MCF 10A (cell line): ENCODE measurements at regions of chr7 and their contacts with region 1.

Region 1: DNA sequence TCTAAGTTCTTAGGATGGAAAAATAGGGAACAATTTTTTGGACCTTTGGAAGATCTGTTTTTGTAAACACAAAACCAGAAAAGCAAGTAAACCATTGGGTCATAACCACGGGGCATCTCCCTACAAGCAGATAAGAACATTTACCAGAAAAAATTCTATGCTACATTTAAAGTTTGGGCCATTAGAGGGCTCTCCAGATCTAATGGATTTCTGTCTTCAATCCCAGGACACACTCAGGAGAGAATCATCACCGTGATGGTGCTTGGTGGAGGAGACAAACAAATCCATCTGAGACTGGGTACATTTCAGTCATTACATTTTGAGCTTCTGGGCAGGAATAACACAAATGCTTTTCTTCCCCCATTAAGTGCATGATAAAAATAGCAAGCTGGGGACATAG is 178.4 kb upstream of the TARP start:
- DNase-seq: peak; percentile 43
- H3K4me3 Mint-ChIP-seq: no peak overlapping the region
- H3K27ac Mint-ChIP-seq: no peak overlapping the region
- H3K4me1 Mint-ChIP-seq: no peaks in the 10 kb centered on the region
- H3K27me3 Mint-ChIP-seq: peaks cover 23% of the 10 kb centered on the region
- CTCF ChIP-seq: peak; percentile 37

Region 2: DNA sequence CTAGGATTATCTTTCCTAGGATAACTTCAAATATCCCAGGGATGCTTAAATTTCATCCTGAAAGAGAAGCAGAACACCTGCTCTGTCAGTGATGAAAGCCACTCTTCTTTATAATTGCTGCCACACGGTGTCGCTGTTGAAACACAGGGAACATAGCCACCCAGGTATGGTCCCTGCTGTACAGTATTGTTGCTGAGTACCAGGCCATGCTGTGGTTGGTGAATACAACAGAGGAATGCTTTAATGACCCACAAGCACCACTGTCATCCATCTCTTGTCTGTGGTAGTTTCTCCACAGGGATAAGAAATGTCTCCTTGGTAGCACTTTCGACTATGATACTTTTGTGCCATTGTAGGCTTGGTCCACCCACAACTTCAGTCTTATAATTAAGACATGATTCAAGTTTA is 344.4 kb before region 1 on chr7:
- CTCF ChIA-PET with region 1: no interaction called
- POLR2A ChIA-PET with region 1: no interaction called
- intact Hi-C with region 1: no loop called
- DNase-seq: peak; percentile 74
- H3K4me3 Mint-ChIP-seq: no peak overlapping the region
- H3K27ac Mint-ChIP-seq: no peak overlapping the region
- H3K4me1 Mint-ChIP-seq: no peaks in the 10 kb centered on the region
- H3K27me3 Mint-ChIP-seq: peaks cover 66% of the 10 kb centered on the region
- CTCF ChIP-seq: peak; percentile 68

Region 3: GRCh38 chr7:38411404-38411803 is 40.4 kb before region 1 on chr7:
- CTCF ChIA-PET with region 1: no interaction called
- POLR2A ChIA-PET with region 1: no interaction called
- intact Hi-C with region 1: no loop called
- DNase-seq: peak; percentile 50
- H3K4me3 Mint-ChIP-seq: no peak overlapping the region
- H3K27ac Mint-ChIP-seq: no peak overlapping the region
- H3K4me1 Mint-ChIP-seq: no peaks in the 10 kb centered on the region
- H3K27me3 Mint-ChIP-seq: peaks cover 4% of the 10 kb centered on the region
- CTCF ChIP-seq: peak; percentile 21

Region 4: GRCh38 chr7:38660427-38661099 is 208.7 kb after region 1 on chr7:
- CTCF ChIA-PET with region 1: no interaction called
- POLR2A ChIA-PET with region 1: no interaction called
- intact Hi-C with region 1: loop called (anchors 1 kb)
- DNase-seq: peak; percentile 62
- H3K4me3 Mint-ChIP-seq: no peak overlapping the region
- H3K27ac Mint-ChIP-seq: no peak overlapping the region
- H3K4me1 Mint-ChIP-seq: no peaks in the 10 kb centered on the region
- H3K27me3 Mint-ChIP-seq: peaks cover 13% of the 10 kb centered on the region
- CTCF ChIP-seq: peak; percentile 55

Region 5: GRCh38 chr7:38716397-38716796 is 264.6 kb after region 1 on chr7:
- CTCF ChIA-PET with region 1: no interaction called
- POLR2A ChIA-PET with region 1: no interaction called
- intact Hi-C with region 1: no loop called
- DNase-seq: no peak
- H3K4me3 Mint-ChIP-seq: no peak overlapping the region
- H3K27ac Mint-ChIP-seq: no peak overlapping the region
- H3K4me1 Mint-ChIP-seq: no peaks in the 10 kb centered on the region
- H3K27me3 Mint-ChIP-seq: no peaks in the 10 kb centered on the region
- CTCF ChIP-seq: no peak

Region 6: DNA sequence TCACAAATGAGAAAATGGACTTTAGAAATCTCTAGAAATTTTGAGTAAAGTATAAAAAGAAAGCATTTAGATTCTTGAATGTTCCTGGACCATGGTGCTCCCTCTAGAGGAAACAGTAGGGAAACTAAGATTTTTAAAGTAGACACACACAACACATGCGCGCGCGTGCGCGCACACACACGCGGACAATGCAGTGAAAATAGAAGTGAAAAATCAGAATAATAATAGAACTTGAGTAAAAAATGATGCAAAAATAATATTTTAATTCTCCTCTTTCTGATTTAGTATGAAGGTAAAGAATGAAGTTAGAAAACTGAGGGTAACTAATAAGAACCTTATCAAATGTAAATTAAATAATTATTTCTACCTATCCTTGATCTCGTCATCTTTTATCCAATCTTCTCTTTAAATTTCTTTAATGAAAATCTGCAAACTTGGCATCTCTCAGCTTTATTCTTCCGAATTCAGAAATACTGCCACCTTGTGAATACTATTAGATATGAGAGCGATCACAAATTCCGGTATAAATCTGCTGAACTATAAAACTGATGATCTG is 296.3 kb after region 1 on chr7:
- CTCF ChIA-PET with region 1: interaction called, 7 read pairs
- POLR2A ChIA-PET with region 1: no interaction called
- intact Hi-C with region 1: loop called (anchors 1 kb)
- DNase-seq: peak; percentile 31
- H3K4me3 Mint-ChIP-seq: no peak overlapping the region
- H3K27ac Mint-ChIP-seq: no peak overlapping the region
- H3K4me1 Mint-ChIP-seq: peaks cover 19% of the 10 kb centered on the region
- H3K27me3 Mint-ChIP-seq: no peaks in the 10 kb centered on the region
- CTCF ChIP-seq: peak; percentile 17